Caco-2 (cell line): ENCODE measurements at regions of chr2 and their contacts with region 1.

Region 1: DNA sequence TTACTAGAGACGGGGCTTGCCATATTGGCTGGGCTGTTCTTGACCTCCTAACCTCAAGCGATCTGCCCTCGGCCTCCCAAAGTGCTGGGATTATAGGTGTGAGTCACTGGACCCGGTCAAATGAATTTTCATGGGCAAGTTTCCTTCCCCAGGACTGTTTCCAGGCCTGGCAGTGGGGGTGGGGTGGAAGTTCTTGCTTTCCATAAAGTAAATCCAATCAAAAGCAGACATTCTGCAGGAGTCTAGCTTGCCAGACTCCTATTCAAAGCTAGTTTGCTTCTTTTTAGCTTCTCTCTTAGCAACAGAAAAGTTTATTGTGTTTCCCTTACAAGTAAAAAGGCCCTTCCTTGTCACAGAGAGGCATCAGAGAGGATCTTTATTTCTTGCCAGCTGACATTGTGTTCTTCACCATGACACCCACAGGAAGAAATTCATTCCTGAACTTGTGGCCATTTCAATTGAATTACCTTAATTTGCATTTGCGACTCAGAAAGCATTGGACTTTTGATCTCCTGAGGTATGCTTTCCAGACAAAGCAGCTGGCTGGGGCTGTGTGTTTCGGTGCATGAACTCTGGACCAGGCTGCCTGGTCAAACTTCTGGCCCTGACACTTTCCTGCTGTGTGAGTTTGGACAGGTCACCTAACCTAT is 37.9 kb downstream of the LYPD1 start:
- DNase-seq: peak; percentile 61 to 72
- H3K4me3 ChIP-seq: no peak overlapping the region
- H3K4me3 Mint-ChIP-seq: no peak overlapping the region
- H3K27ac Mint-ChIP-seq: peak overlapping the region; percentile 48
- H3K4me1 ChIP-seq: peaks cover 25% of the 10 kb centered on the region
- H3K4me1 Mint-ChIP-seq: peaks cover 20% of the 10 kb centered on the region
- H3K27me3 ChIP-seq: no peaks in the 10 kb centered on the region
- H3K27me3 Mint-ChIP-seq: no peaks in the 10 kb centered on the region
- CTCF ChIP-seq: no peak

Region 2: GRCh38 chr2:132642415-132642814 is 10.3 kb after region 1 on chr2:
- CTCF ChIA-PET with region 1: no interaction called
- POLR2A ChIA-PET with region 1: no interaction called
- intact Hi-C with region 1: loop called (anchors 1 kb)
- DNase-seq: peak in 1 of 2 experiments; percentile 41
- H3K4me3 ChIP-seq: no peak overlapping the region
- H3K4me3 Mint-ChIP-seq: no peak overlapping the region
- H3K27ac Mint-ChIP-seq: no peak overlapping the region
- H3K4me1 ChIP-seq: peaks cover 14% of the 10 kb centered on the region
- H3K4me1 Mint-ChIP-seq: peaks cover 25% of the 10 kb centered on the region
- H3K27me3 ChIP-seq: no peaks in the 10 kb centered on the region
- H3K27me3 Mint-ChIP-seq: no peaks in the 10 kb centered on the region
- CTCF ChIP-seq: no peak

Region 3: GRCh38 chr2:132757676-132758075 is 125.6 kb after region 1 on chr2:
- CTCF ChIA-PET with region 1: no interaction called
- POLR2A ChIA-PET with region 1: no interaction called
- intact Hi-C with region 1: no loop called
- DNase-seq: no peak
- H3K4me3 ChIP-seq: no peak overlapping the region
- H3K4me3 Mint-ChIP-seq: no peak overlapping the region
- H3K27ac Mint-ChIP-seq: peak overlapping the region; percentile 7
- H3K4me1 ChIP-seq: peaks cover 39% of the 10 kb centered on the region
- H3K4me1 Mint-ChIP-seq: peaks cover 36% of the 10 kb centered on the region
- H3K27me3 ChIP-seq: no peaks in the 10 kb centered on the region
- H3K27me3 Mint-ChIP-seq: no peaks in the 10 kb centered on the region
- CTCF ChIP-seq: no peak